Activated naive CD4-positive, alpha-beta T cell treated with anti-CD3 and anti-CD28 coated beads for 36 hours (primary cell): ENCODE measurements at regions of chr17 and their contacts with region 1.

Region 1: DNA sequence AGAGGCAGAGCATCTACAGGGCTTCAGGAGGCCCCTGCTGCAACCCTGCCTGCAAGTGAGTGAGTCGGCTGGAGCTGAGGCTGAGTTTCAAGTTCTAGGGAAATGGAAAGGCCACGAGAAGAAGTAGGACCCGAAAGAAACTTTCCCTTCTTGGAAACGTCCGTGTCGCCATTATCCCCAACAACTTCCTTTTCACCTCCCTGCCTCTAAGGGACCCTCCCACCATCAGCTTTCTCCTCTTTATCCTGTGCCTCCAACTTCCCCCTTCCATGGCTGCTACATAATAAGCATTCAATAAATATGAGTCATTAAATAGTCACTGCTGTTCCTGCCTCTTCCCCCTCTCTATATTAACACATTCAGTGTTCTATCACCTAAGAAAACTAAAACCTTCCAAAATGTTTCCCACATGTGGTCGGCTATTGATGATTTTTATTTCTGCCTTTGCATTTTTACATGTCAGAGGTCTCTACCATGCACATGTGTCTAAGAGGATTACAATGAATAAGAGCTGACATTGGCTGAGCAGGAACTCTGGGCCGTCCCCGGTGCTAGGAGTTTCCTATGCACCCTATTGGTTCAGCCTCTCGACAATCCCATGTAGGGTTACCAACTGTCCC is 115.9 kb upstream of the TNRC6C start:
- DNase-seq: peak; percentile 79
- H3K4me3 Mint-ChIP-seq: no peak overlapping the region
- H3K27ac Mint-ChIP-seq: peak overlapping the region; percentile 81
- H3K4me1 Mint-ChIP-seq: peaks cover 54% of the 10 kb centered on the region
- H3K27me3 Mint-ChIP-seq: peaks cover 8% of the 10 kb centered on the region

Region 2: DNA sequence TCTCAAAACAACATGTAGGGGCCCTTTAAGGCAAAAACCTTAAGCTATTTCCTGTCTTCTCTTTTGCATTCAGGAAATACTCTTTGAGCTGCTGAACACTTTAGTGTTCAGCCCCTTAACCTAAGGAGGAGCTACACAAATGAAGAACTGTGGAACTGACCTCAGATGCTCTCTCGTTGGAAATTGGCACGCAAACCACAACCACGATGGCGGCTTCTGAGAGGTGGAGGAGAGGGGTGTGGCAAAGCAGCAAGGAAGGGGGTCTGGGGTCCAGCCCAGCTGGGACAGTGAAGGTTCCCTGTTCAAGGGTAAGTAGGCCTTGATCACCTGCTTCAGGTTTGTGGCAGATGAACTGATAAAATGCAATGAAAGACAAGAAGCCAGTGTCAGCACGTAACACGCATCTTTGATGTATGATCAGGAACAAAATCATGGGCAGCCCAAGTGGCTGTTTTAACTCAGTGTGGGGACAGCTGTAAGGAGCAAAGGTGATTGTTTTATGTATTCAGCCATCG is 175.7 kb before region 1 on chr17:
- CTCF ChIA-PET with region 1: no interaction called
- intact Hi-C with region 1: loop called (anchors 2 kb)
- DNase-seq: peak; percentile 86
- H3K4me3 Mint-ChIP-seq: peak overlapping the region; percentile 94
- H3K27ac Mint-ChIP-seq: peak overlapping the region; percentile 98
- H3K4me1 Mint-ChIP-seq: peaks cover 49% of the 10 kb centered on the region
- H3K27me3 Mint-ChIP-seq: no peaks in the 10 kb centered on the region

Region 3: DNA sequence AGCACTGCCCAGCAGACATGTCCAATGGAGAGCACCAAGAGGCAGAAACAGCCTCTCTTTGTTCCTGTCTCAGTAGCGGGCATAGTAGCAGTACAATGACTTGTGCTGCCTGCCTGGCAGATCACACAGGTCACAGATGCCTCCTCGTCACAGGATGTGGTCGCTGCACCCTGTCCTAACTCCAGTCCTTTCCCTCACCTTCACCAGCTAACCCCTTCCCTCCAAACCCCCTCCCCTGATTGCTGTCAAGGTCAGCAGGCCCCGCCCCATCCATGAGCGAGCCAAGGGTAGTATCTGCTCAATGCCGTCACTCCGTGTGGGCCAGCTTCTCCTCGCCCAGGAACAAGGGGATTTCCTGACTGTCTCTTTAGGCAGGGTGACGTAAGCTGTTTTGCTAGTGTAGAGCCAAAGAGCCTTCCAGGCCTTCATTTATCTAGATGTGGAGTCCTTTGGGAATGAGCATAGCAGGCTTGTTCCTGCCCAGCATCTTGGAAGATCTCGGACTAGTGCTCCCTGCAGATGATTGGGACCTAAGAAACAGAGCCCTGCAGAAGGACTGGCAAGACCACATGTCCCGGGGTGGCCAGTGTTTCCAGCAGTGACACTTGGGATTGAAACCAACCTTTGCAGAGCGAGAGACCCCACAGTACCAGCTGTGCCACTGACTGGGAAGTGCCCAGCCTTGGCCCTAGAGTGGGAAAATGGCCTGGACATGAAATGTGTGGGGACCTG is 40.0 kb after region 1 on chr17:
- CTCF ChIA-PET with region 1: no interaction called
- intact Hi-C with region 1: loop called (anchors 1 kb)
- DNase-seq: peak; percentile 94
- H3K4me3 Mint-ChIP-seq: peak overlapping the region; percentile 54
- H3K27ac Mint-ChIP-seq: peak overlapping the region; percentile 88
- H3K4me1 Mint-ChIP-seq: peaks cover 87% of the 10 kb centered on the region
- H3K27me3 Mint-ChIP-seq: no peaks in the 10 kb centered on the region

Region 4: GRCh38 chr17:78013683-78014467 is 171.2 kb after region 1 on chr17:
- CTCF ChIA-PET with region 1: interaction called, 3 read pairs
- intact Hi-C with region 1: loop called (anchors 5 kb)
- DNase-seq: peak; percentile 77
- H3K4me3 Mint-ChIP-seq: no peak overlapping the region
- H3K27ac Mint-ChIP-seq: no peak overlapping the region
- H3K4me1 Mint-ChIP-seq: peaks cover 22% of the 10 kb centered on the region
- H3K27me3 Mint-ChIP-seq: no peaks in the 10 kb centered on the region